ENCODE measurements at regions of chr18 and their contacts with region 1.

Region 1: DNA sequence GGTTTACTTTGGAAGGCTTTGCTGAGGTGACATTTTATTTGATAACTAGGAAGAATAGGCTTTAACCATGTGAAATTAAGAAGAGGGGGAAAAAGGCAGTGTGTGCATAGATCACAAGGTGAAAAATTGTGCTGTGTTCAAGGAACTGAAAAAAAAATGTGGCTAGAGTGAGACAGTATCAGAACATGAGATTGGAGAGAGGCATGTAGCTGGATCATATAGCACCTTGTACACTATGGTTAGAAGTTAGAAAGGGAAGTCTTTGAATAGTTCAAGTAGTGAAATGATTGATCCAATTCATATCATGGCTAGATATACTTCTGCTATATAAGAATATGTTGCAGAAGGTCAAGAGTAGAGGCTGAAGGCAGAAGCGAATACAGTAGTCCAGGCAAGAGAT is 12.3 kb upstream of the TNFRSF11A start:
- DNase-seq: no peak
- H3K4me3 ChIP-seq: no peak overlapping the region
- H3K27ac ChIP-seq: no peak overlapping the region
- H3K4me1 ChIP-seq: no peaks in the 10 kb centered on the region
- H3K27me3 ChIP-seq: no peaks in the 10 kb centered on the region

Region 2: DNA sequence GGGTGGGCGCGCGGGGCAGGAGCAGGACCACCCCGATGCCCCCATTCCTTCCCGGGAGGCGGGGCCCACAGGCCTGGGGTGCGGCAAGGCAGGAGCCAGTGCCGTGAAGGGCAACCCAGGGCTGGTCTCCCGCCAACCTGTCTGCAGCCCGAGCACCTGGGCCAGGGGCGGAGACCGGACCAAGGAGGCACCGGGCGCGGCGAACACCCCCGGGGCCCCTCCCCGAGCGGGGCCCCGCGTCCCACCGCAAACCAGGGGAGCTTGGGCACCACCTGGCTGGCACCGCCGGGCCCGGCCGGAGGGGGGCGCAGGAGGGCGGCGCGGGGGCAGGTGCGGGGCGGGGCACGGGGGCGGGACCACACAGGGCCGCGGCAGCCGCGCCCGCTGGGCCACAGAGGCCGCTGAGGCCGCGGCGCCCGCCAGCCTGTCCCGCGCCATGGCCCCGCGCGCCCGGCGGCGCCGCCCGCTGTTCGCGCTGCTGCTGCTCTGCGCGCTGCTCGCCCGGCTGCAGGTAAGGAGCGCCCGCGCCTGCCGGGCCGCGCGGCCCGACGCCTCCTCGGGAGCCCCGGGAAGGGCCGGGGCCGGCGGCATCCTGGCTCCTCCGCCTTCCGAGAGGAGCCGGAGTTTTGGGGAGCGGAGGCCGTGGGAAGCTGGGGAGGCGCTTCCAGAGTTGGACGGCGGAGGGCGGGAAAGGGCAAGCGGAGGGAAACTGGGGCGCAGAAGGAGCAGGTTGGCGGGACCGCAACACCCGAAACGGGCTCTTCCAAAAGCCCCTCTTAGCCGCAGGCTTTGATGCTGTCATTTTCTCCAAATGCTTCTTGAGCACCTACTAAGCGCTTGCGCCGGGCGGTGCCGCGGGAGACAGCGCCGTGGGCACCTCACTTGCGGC is 12.3 kb after region 1 on chr18 and contains the start of gene TNFRSF11A:
- CTCF ChIA-PET with region 1: interaction called, 27 read pairs
- POLR2A ChIA-PET with region 1: no interaction called
- DNase-seq: peak in 2 of 3 donors; percentile 64 to 70
- H3K4me3 ChIP-seq: peak within 1 kb of the TSS; percentile 50 to 85 (median 74)
- H3K27ac ChIP-seq: no peak within 1 kb of the TSS
- H3K4me1 ChIP-seq: peaks cover 5 to 62% (median 46%) of the 10 kb centered on the region in 4 experiments
- H3K27me3 ChIP-seq: peaks cover 0 to 13% (median 0%) of the 10 kb centered on the region in 5 experiments

Measured in common myeloid progenitor, CD34-positive (primary cell).